Naive thymus-derived CD4-positive, alpha-beta T cell (primary cell): ENCODE measurements at regions of chr12 and their contacts with region 1.

Region 1: DNA sequence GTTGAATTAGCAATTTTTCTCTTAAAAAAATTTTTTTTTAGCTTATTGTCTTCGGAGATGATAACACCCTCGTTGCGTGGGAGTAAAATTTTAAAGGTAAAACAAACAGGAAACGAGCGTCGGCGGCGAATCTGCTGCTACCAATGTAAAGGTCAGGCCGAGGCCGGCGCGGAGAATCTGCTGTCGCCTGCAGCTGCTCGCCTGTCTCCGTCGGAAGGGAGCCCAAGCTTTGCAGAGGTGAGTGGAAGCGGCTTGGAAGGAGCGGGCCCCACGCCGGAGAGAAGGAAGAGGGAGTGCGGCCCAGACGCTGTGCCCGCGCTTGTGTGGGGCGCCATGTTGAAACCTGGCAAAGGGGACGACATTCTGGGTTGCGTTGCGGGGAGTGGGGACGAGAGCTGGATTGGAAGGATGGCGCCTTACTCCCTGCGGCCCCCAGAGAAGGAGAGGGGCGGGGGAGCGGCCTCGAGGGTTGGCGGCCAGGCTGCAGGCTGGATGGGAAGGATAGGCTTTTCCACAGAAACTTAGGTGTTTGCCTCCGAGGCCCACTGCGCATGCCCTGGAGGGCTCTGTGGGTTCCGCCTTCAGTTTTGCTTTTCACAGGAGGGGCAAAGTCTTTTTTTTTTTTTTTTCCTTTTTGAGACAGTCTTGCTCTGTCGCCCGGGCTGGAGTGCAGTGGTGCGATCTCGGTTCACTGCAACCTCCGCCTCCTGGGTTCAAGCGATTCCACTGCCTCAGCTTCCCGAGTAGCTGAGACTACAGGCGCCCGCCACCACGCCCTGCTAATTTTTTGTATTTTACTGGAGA is at the start of gene SNRNP35:
- DNase-seq: peak; percentile 79 to 92 (median 88)
- ATAC-seq: peak; percentile 85
- H3K4me3 ChIP-seq: peak within 1 kb of the TSS; percentile 97
- H3K4me3 Mint-ChIP-seq: peak within 1 kb of the TSS; percentile 92 to 100 (median 99)
- H3K27ac ChIP-seq: peak within 1 kb of the TSS; percentile 99
- H3K27ac Mint-ChIP-seq: peak within 1 kb of the TSS; percentile 100
- H3K4me1 ChIP-seq: peaks cover 14 to 18% of the 10 kb centered on the region in 2 donors
- H3K4me1 Mint-ChIP-seq: peaks cover 21 to 45% (median 26%) of the 10 kb centered on the region in 7 donors
- H3K27me3 ChIP-seq: no peaks in the 10 kb centered on the region
- H3K27me3 Mint-ChIP-seq: no peaks in the 10 kb centered on the region
- total RNA-seq, gene SNRNP35: 30.2 to 53.4 (median 35.8) TPM

Region 2: GRCh38 chr12:123388177-123388947 is 69.8 kb before region 1 on chr12:
- CTCF ChIA-PET with region 1: no interaction called
- POLR2A ChIA-PET with region 1: interaction called, 10 read pairs
- intact Hi-C with region 1: loop called (anchors 1 to 5 kb)
- DNase-seq: peak; percentile 64 to 84 (median 75)
- ATAC-seq: peak; percentile 75
- H3K4me3 ChIP-seq: peak overlapping the region; percentile 88
- H3K4me3 Mint-ChIP-seq: peak overlapping the region; percentile 78 to 91 (median 84)
- H3K27ac ChIP-seq: peak overlapping the region; percentile 79
- H3K27ac Mint-ChIP-seq: peak overlapping the region in 8 of 9 donors; percentile 47 to 93 (median 86)
- H3K4me1 ChIP-seq: peaks cover 11 to 13% of the 10 kb centered on the region in 2 donors
- H3K4me1 Mint-ChIP-seq: peaks cover 10 to 49% (median 43%) of the 10 kb centered on the region in 7 donors
- H3K27me3 ChIP-seq: no peaks in the 10 kb centered on the region
- H3K27me3 Mint-ChIP-seq: no peaks in the 10 kb centered on the region

Region 3: GRCh38 chr12:123445388-123446351 is 12.5 kb before region 1 on chr12:
- CTCF ChIA-PET with region 1: interaction called, 10 read pairs
- POLR2A ChIA-PET with region 1: interaction called, 74 read pairs
- intact Hi-C with region 1: no loop called
- DNase-seq: no peak
- ATAC-seq: no peak
- H3K4me3 ChIP-seq: no peak overlapping the region
- H3K4me3 Mint-ChIP-seq: peak overlapping the region in 9 of 10 donors; percentile 4 to 67 (median 50)
- H3K27ac ChIP-seq: no peak overlapping the region
- H3K27ac Mint-ChIP-seq: peak overlapping the region in 8 of 9 donors; percentile 52 to 84 (median 72)
- H3K4me1 ChIP-seq: peaks cover 0 to 18% of the 10 kb centered on the region in 2 donors
- H3K4me1 Mint-ChIP-seq: peaks cover 8 to 39% (median 28%) of the 10 kb centered on the region in 7 donors
- H3K27me3 ChIP-seq: no peaks in the 10 kb centered on the region
- H3K27me3 Mint-ChIP-seq: no peaks in the 10 kb centered on the region

Region 4: DNA sequence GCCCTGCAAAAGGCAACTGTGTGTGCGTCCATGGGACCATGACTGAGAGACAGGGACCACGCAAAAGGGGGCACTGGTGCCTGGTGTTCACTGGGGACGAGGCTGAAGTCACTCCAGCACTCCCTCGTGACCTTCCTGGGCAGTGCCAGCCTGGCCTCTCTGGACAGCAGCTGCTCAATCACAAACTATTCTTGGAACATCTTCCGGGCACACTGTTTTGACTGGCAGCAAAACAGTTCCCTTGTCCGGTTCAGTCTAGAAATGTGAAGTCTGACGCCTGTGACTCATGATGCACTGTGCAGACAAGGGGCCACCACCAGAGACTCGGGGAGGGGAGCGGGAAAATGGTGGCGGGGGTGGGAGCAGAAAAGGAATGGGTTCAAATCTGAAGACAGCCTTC is 20.6 kb after region 1 on chr12:
- CTCF ChIA-PET with region 1: no interaction called
- POLR2A ChIA-PET with region 1: interaction called, 64 read pairs
- intact Hi-C with region 1: loop called in 1 of 2 experiments (anchors 1 kb)
- DNase-seq: peak in 1 of 9 donors; percentile 2
- ATAC-seq: no peak
- H3K4me3 ChIP-seq: no peak overlapping the region
- H3K4me3 Mint-ChIP-seq: no peak overlapping the region
- H3K27ac ChIP-seq: no peak overlapping the region
- H3K27ac Mint-ChIP-seq: peak overlapping the region in 5 of 9 donors; percentile 46 to 93 (median 75)
- H3K4me1 ChIP-seq: peaks cover 0 to 23% of the 10 kb centered on the region in 2 donors
- H3K4me1 Mint-ChIP-seq: peaks cover 21 to 65% (median 50%) of the 10 kb centered on the region in 7 donors
- H3K27me3 ChIP-seq: no peaks in the 10 kb centered on the region
- H3K27me3 Mint-ChIP-seq: no peaks in the 10 kb centered on the region

Region 5: DNA sequence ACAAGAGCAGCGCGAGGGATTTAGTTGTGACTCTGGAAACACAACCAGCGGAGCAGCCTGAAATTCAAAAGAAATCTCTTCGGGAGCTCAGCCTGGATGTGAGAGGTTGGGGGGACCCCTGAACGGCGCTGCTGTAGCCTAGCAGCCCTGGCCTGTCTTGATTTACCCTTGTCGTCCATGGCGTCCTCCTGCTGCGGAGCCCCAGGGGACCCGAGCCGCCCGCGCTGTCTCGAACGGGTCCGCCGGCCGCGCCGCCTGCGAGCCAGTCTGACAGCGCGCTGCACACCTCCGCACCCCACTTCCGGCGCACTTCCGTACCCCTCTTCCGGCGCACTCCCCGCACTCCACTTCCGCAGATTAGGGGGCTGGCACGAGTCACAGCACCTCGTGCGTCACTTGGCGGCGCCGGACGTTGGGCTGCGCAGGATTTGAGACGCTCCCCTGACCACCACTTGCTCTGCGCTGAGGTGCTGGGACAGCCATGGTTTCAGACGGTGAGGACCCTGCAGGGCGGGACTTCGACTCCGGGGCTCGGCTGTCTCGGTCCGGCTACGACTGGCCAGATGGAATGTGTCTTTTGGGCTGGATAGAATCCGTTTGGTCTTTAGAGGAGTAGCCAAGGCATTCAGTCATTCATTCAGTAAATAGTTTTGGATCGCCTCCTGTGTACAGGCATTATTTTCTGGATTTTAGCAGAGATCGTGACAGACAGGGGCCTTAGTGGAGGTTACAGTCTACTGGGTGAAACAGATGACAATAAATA is 175.4 kb after region 1 on chr12 and contains the starts of genes EIF2B1 and GTF2H3:
- CTCF ChIA-PET with region 1: no interaction called
- POLR2A ChIA-PET with region 1: no interaction called
- intact Hi-C with region 1: loop called (anchors 1 kb)
- DNase-seq: peak; percentile 83 to 96 (median 94)
- ATAC-seq: peak; percentile 98
- H3K4me3 ChIP-seq: peak within 1 kb of the TSS; percentile 85
- H3K4me3 Mint-ChIP-seq: peak within 1 kb of the TSS; percentile 89 to 100 (median 96)
- H3K27ac ChIP-seq: peak within 1 kb of the TSS; percentile 91
- H3K27ac Mint-ChIP-seq: peak within 1 kb of the TSS; percentile 91 to 99 (median 96)
- H3K4me1 ChIP-seq: peaks cover 11 to 16% of the 10 kb centered on the region in 2 donors
- H3K4me1 Mint-ChIP-seq: peaks cover 21 to 54% (median 43%) of the 10 kb centered on the region in 7 donors
- H3K27me3 ChIP-seq: no peaks in the 10 kb centered on the region
- H3K27me3 Mint-ChIP-seq: no peaks in the 10 kb centered on the region
- total RNA-seq, gene EIF2B1: 44.0 to 64.3 (median 49.5) TPM
- total RNA-seq, gene GTF2H3: 21.4 to 39.7 (median 27.7) TPM